HCT116 (cell line): ENCODE measurements at regions of chr12 and their contacts with region 1.

Region 1: GRCh38 chr12:18224745-18225144 is 36.6 kb upstream of the PIK3C2G start:
- DNase-seq: peak; percentile 26
- ATAC-seq: peak; percentile 75
- H3K4me3 ChIP-seq: no peak overlapping the region
- H3K27ac ChIP-seq: no peak overlapping the region
- H3K4me1 ChIP-seq: no peaks in the 10 kb centered on the region
- H3K27me3 ChIP-seq: no peaks in the 10 kb centered on the region
- CTCF ChIP-seq: peak; percentile 28 to 50 (median 44); a peak in 5 of 6 replicates
- POLR2A ChIP-seq: no peak
- RAD21 ChIP-seq: peak; percentile 64

Region 2: DNA sequence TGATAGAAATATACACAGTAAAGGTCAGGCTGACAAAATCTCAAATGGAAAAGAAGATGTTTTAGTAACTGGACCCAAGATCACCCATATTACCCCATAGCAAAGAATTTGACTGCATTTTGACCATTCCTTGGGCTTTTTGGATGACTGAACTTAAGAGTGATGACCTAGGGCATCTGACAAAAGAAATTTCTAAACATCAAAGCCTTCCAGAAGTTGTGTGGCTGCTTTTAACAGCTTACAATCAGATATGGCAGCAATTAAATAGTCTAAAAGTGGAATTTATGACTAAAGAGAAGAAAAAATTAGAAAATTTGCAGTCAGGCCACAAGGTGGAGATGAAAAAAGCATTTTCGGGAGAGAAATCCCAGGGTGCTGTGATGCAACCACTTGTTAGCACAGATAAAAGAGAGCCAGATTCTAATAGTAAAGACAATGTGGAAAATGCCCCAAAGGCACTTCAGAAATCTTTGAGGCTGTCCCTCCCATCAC is 697.7 kb before region 1 on chr12:
- CTCF ChIA-PET with region 1: no interaction called
- POLR2A ChIA-PET with region 1: no interaction called
- RAD21 ChIA-PET with region 1: no interaction called
- intact Hi-C with region 1: no loop called
- DNase-seq: no peak
- ATAC-seq: no peak
- H3K4me3 ChIP-seq: no peak overlapping the region
- H3K27ac ChIP-seq: no peak overlapping the region
- H3K4me1 ChIP-seq: no peaks in the 10 kb centered on the region
- H3K27me3 ChIP-seq: no peaks in the 10 kb centered on the region
- CTCF ChIP-seq: 0 out of 6 replicates have a peak, but pooled peaks of 1 of the 3 experiments have one; percentile 17
- POLR2A ChIP-seq: no peak
- RAD21 ChIP-seq: no peak

Region 3: GRCh38 chr12:17999174-17999801 is 225.5 kb before region 1 on chr12:
- CTCF ChIA-PET with region 1: no interaction called
- POLR2A ChIA-PET with region 1: no interaction called
- RAD21 ChIA-PET with region 1: no interaction called
- intact Hi-C with region 1: no loop called
- DNase-seq: no peak
- ATAC-seq: no peak
- H3K4me3 ChIP-seq: no peak overlapping the region
- H3K27ac ChIP-seq: no peak overlapping the region
- H3K4me1 ChIP-seq: no peaks in the 10 kb centered on the region
- H3K27me3 ChIP-seq: no peaks in the 10 kb centered on the region
- CTCF ChIP-seq: no peak
- POLR2A ChIP-seq: no peak
- RAD21 ChIP-seq: no peak

Region 4: DNA sequence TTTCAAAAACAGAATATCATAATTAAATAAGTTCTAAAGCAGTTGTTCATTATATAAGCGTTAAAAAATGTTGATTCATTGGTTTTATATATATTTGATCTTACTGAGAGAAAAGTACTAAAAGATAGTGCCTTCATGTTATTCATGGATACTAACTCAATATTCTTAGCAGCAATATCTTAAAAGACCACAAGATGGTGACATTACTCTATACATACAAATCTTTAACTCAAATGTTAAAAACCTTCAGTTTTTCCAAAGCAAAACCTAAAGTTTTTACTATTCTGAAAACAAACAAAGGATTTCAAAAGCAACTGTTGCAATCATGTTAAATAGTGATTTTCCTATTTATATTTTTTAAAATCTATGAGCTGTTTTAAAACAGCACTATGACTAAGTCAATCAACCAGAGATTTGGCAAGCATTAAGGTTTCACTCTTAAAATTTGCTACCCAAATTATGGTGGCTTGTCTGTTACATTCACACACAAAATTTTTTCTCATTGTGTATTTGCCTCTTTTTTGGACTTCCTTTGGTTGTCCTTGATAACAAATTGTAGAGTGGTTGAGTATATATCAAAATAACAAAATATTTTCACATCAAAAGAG is 84.7 kb before region 1 on chr12:
- CTCF ChIA-PET with region 1: interaction called, 13 read pairs
- POLR2A ChIA-PET with region 1: no interaction called
- RAD21 ChIA-PET with region 1: interaction called in 1 of 2 experiments, 3 read pairs
- intact Hi-C with region 1: loop called (anchors 1 kb)
- DNase-seq: no peak
- ATAC-seq: no peak
- H3K4me3 ChIP-seq: no peak overlapping the region
- H3K27ac ChIP-seq: no peak overlapping the region
- H3K4me1 ChIP-seq: peaks cover 0 to 8% of the 10 kb centered on the region in 2 experiments; a peak in 2 of 4 replicates
- H3K27me3 ChIP-seq: no peaks in the 10 kb centered on the region
- CTCF ChIP-seq: peak; percentile 28 to 70 (median 37); a peak in 4 of 6 replicates
- POLR2A ChIP-seq: no peak
- RAD21 ChIP-seq: peak; percentile 62

Region 5: GRCh38 chr12:18158774-18159557 is 65.8 kb before region 1 on chr12:
- CTCF ChIA-PET with region 1: no interaction called
- POLR2A ChIA-PET with region 1: no interaction called
- RAD21 ChIA-PET with region 1: no interaction called
- intact Hi-C with region 1: loop called (anchors 5 kb)
- DNase-seq: no peak
- ATAC-seq: peak; percentile 80; the same call in 1 of the 2 replicates
- H3K4me3 ChIP-seq: no peak overlapping the region
- H3K27ac ChIP-seq: no peak overlapping the region
- H3K4me1 ChIP-seq: no peaks in the 10 kb centered on the region
- H3K27me3 ChIP-seq: no peaks in the 10 kb centered on the region
- CTCF ChIP-seq: peak; percentile 15 to 88 (median 86); a peak in 4 of 6 replicates
- POLR2A ChIP-seq: no peak
- RAD21 ChIP-seq: peak; percentile 35